Heart right ventricle (tissue), 16 donors: ENCODE measurements at regions of chr2 and their contacts with region 1.

Region 1: DNA sequence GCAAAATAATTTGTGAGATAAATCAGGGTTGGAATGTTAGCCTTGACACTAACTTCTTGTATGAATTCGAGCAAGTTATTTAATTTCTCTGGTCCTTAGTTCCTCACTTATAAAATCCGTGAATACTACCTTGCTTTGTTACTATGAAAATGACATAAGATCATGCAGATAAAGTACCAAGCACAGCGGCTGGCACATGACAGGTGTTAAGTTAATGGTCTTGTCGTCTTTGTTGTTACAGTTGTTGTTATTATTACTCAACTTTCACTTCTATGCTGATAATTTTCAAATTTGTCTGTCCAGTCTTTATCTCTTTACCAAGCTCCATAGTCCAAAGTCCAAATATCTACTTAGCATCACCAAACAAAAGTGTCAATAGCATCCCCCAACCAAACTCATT is 482.1 kb downstream of the ARHGAP15 start:
- DNase-seq: no peak
- ATAC-seq: no peak
- H3K4me3 ChIP-seq: no peak overlapping the region
- H3K27ac ChIP-seq: no peak overlapping the region
- H3K4me1 ChIP-seq: peaks cover 0 to 7% (median 0%) of the 10 kb centered on the region in 9 donors
- H3K27me3 ChIP-seq: no peaks in the 10 kb centered on the region
- CTCF ChIP-seq: no peak

Region 2: DNA sequence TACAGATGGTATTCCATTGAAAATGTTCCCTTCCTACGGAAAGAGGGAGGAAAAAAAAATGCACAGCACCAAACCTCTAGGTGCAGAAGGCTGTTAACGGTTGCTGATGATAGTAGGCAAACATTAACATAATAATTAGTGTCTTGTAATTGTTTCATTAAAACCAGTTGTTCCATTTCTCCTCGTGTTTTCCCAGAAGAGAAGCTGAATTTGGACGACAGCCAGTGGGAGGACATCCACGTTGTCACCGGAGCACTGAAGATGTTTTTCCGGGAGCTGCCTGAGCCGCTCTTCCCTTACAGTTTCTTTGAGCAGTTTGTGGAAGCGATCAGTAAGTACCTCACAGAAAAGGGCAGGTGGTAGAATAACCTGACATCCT is 12.6 kb after region 1 on chr2:
- intact Hi-C with region 1: loop called in 1 of 10 experiments (anchors 1 kb)
- DNase-seq: peak in 1 of 2 donors; percentile 16
- ATAC-seq: peak in 1 of 8 donors; percentile 25
- H3K4me3 ChIP-seq: no peak overlapping the region
- H3K27ac ChIP-seq: no peak overlapping the region
- H3K4me1 ChIP-seq: peaks cover 0 to 3% (median 0%) of the 10 kb centered on the region in 9 donors
- H3K27me3 ChIP-seq: no peaks in the 10 kb centered on the region
- CTCF ChIP-seq: no peak

Region 3: GRCh38 chr2:143779021-143779420 is 167.7 kb after region 1 on chr2:
- intact Hi-C with region 1: no loop called
- DNase-seq: no peak
- ATAC-seq: no peak
- H3K4me3 ChIP-seq: no peak overlapping the region
- H3K27ac ChIP-seq: no peak overlapping the region
- H3K4me1 ChIP-seq: no peaks in the 10 kb centered on the region
- H3K27me3 ChIP-seq: no peaks in the 10 kb centered on the region
- CTCF ChIP-seq: no peak